ENCODE measurements at regions of chr5 and their contacts with region 1.

Region 1: DNA sequence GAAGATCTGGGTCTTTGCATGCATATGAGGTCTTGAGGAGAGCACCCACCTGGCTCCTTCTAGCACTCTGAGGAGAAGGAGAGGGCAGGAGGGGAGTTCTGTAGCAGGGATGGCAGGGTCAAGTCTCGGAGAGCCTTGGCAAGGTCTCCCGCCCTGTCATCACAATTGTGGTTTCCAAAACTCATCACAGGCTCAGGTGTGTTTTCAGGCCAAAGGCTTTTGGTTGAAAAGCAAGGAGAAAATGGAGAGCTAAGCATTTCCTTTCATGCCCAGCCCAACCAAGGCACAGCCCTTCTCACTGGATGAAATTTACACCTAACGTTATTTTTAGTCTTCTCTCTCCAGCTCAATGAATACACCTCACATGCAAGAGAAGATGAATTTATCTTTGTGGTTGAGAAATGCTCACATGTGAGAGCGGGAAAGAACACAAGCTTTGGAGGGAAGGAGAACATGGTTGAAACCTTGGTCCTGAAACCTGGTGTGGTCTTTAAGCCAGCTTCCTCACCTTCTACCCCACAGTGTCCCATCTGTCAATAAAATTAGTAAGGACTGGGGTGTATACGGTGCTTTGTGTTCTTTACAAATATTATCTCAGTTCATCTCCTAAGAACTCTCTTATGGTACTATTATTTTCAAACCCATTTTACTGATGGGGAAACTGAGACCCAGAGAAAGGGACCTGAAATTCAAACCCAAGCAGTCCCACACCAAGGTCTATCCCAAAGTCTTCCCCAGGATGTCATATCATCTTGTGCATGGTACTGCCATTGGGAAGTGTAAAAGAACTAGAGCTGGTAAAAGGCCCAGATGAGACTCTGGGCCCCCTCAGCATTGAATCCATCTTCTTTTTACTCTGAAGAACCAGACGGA is 47.8 kb upstream of the CPEB4 start:
- DNase-seq: no peak
- CTCF ChIP-seq: no peak

Region 2: DNA sequence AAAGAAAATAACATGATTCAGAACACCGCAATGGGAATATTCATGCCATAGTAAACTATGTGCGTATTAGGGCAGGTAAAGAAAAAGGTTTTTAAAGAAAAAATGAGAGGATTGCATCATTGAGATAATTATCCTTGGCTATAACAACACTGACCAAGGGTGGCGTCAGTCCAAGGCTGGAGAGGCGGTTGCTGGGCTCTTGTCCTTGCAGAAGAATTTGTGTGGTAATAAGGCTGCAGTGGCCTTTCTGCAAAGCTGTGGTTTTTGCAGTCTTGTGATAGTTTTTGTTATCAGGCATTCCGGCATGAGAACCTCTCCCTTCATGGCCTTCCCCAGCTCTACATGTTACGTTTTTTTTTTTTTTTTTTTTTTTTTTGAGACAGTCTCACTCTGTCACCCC is 237.9 kb before region 1 on chr5:
- CTCF ChIA-PET with region 1: no interaction called
- POLR2A ChIA-PET with region 1: no interaction called
- DNase-seq: no peak
- CTCF ChIP-seq: no peak

Region 3: GRCh38 chr5:173829817-173830216 is 10.5 kb before region 1 on chr5:
- CTCF ChIA-PET with region 1: interaction called, 18 read pairs
- POLR2A ChIA-PET with region 1: no interaction called
- DNase-seq: no peak
- CTCF ChIP-seq: no peak

Region 4: DNA sequence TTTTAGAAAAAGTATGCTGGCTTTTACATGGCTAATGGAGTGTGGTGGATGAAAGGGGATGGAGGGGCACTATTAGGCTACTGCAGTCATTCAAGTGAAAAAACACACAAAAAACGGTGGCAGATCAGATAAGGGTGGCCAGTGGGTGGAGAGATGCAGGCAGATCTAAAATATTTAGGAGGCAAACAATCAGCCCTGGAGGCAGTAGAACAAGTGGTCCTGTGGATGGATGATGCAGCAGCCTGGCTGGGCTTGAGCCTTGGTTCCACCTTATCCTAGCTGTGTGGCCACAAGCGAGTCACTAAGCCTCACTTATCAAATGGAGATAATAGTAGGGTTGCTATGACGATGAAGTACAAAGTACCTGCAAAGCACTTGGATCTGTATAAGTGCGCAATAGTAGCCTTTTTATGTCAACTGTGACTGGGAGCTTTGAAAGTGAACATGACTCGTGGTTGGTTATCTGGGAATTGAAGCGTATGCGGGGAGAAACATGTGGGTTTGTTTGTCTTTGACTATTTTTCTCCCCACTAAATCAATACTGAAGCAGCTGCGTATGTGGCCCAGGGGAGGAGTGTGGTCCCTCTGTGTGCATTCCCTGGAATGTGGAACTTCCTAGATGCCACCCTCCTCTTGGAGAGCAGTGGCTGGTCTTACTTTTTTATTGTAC is 225.3 kb after region 1 on chr5:
- CTCF ChIA-PET with region 1: no interaction called
- POLR2A ChIA-PET with region 1: no interaction called
- DNase-seq: no peak
- CTCF ChIP-seq: no peak

Measured in GM10248 (cell line).